ENCODE measurements at regions of chr10 and their contacts with region 1.

Region 1: DNA sequence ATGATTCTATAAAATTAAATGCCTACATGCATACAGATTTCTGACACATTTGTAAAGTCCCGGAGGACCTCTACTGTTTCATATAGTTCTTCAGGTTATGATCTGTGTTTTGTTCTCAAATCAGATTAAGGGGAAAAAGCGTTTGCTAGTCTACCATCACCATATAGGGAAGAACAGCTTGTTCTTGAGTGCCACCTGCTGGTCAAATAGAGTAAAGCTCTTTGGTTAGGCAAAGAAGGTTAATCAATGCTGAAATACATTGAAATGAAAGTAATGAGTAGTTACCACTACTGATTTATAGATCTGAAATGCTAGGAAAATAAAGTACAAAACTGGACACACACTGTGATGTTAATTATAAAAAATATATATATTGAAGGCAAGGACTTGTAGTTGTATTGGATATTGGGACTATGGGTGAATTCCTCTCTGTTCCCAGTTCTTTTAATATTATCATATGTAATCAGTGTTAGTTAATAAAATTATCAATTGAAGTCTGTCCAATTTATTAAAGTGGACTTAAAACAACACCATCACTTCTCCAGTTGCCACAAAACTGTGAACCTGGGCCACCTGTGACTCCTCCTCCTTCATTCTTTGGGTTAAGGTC is 72.6 kb upstream of the PDLIM1 start:
- DNase-seq: peak in 2 of 10 donors; percentile 43 to 50
- H3K4me3 ChIP-seq: no peak overlapping the region
- H3K27ac ChIP-seq: peak overlapping the region in 9 of 59 donors; percentile 17 to 64 (median 31)
- H3K27me3 ChIP-seq: no peaks in the 10 kb centered on the region
- CTCF ChIP-seq: peak; percentile 78 to 98 (median 92)

Region 2: DNA sequence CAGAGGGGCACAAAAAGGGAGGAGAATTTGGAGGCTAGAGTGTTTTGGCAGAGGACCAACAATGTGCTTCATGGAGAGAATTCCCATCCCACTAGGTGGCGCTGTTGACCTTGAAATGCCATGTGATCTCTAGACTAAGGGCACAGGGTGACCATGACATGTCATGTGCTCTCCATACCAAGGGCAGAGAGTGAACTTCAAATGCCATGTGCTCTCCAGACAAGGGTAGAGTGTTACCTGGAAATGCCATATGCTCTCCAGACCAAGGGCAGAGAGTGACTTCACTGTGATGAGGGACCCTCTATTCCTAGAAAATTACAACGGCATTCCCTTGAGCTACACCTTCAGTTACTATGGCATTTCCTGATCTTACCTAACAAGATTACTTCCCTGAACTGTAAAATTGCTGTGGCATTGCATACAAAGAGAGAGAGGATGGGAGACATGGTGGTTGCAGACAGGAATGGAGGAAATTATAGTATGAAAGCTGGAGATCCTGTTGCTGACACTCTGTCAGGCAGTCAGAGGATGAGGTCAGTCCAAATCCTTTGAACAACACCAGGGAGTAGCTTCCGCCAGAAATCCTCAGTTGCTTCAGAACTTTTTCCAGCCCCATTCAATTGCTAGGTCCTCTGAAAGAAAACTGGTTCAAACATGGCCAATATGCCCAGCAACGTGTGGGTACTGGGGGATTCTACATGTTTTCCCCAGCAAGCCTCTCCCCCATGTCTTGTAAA is 230.2 kb before region 1 on chr10:
- intact Hi-C with region 1: loop called (anchors 2 to 10 kb)
- DNase-seq: peak in 6 of 10 donors; percentile 4 to 70 (median 30)
- H3K4me3 ChIP-seq: no peak overlapping the region
- H3K27ac ChIP-seq: no peak overlapping the region
- H3K27me3 ChIP-seq: peaks cover 0 to 4% (median 0%) of the 10 kb centered on the region in 45 donors
- CTCF ChIP-seq: peak; percentile 19 to 75 (median 62)

Region 3: DNA sequence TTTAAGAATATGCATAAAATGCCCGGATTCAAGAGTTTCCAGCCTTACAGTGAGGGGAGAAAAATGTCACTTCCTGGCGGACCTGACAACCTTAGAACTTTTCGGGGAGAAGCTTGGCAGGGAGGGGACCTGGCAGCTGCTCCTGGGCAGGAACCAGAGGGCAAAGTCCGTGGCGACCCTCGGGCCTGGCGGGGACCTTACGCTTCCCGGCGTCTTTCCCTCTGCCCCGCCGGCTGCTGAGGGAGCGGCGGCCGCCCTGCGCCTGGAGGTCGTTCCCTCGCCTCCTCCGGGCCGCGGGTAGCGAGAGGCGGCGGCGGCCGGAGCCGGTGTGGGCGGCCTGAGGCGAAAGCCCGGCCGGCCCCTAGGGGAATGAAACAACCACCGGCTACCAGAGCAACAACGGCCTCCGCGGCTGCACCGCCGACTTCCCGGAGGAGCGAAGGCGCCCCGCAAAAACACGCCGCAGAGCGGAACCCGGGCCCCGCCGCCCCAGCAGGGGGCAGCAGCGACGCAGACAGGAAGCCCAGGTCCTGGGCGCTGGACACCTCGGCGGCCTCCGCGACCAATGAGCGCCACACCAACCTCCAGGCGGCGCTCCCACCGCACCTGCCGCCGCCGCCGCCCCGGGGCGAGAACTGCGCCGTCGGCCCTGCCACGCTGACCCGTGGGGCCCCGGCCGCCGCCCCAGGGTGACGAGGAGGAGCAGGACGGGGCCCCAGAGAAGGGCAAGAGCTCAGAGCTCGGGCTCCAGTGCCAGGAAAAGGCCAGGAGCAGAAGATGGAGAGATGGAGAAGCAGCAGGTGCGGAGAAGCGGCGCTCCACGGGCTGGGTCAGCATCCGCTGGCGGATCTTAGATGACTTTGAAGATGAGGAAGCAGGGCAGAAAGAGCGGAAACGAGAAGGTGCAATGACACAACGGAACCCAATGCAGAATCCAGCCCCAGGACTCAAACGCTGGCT is 179.9 kb before region 1 on chr10:
- intact Hi-C with region 1: loop called in 1 of 2 experiments (anchors 5 kb)
- DNase-seq: peak; percentile 52 to 82 (median 62)
- H3K4me3 ChIP-seq: peak overlapping the region; percentile 29 to 78 (median 63)
- H3K27ac ChIP-seq: peak overlapping the region in 28 of 59 donors; percentile 10 to 84 (median 48)
- H3K27me3 ChIP-seq: peaks cover 0 to 33% (median 0%) of the 10 kb centered on the region in 45 donors
- CTCF ChIP-seq: peak; percentile 50 to 95 (median 82)

Measured in dorsolateral prefrontal cortex (tissue), 120 donors.